Activated T-helper 2 cell treated with anti-CD3 and anti-CD28 coated beads, Interferon-gamma antibody, Interleukin-2, Interleukin-4, amounts not matched to agents 10 μg/mL and 5 μg/mL and 100 μg/mL, durations not matched to agents 14 hours and 24 hours and 36 hours (primary cell): ENCODE measurements at regions of chr13 and their contacts with region 1.

Region 1: DNA sequence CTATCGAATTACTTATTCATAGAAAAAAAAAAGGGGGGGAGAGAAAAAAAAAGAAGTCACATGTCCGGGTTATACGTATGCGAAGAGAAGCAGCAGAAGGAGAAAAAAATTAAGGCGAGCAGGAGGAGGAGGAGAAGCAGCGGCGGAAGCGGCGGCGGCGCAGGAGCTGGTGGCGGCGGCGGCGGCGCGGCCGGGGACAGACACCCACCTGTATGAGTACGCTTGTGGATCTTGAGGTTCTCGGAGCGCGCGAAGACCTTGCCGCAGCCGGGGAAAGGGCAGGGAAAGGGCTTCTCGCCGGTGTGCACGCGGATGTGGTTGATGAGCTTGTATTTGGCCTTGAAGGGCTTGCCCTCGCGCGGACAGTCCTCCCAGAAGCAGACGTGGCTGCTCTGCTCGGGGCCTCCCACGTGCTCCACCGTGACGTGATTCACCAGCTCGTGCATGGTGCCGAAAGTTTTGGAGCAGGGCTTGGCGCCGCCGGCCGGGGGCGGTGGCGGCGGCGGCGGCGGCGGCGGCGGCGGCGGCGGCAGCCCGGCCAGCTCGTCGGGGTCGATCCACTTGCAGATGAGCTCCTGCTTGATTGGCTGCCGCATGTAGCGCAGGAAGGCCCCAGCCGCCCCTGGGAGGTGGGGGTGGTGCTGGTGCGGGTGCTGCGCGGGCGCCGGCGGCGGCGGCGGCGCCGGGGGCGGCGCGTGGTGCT is 1.5 kb downstream of the ZIC5 start:
- DNase-seq: no peak
- H3K4me3 Mint-ChIP-seq: no peak overlapping the region
- H3K27ac Mint-ChIP-seq: peak overlapping the region; percentile 65
- H3K4me1 Mint-ChIP-seq: peaks cover 8% of the 10 kb centered on the region
- H3K27me3 Mint-ChIP-seq: peaks cover 72% of the 10 kb centered on the region

Region 2: GRCh38 chr13:99895223-99895994 is 74.7 kb before region 1 on chr13:
- intact Hi-C with region 1: loop called (anchors 5 kb)
- DNase-seq: no peak
- H3K4me3 Mint-ChIP-seq: peak overlapping the region; percentile 55
- H3K27ac Mint-ChIP-seq: no peak overlapping the region
- H3K4me1 Mint-ChIP-seq: peaks cover 4% of the 10 kb centered on the region
- H3K27me3 Mint-ChIP-seq: peaks cover 65% of the 10 kb centered on the region

Region 3: GRCh38 chr13:99959538-99960230 is 10.4 kb before region 1 on chr13:
- intact Hi-C with region 1: loop called (anchors 2 kb)
- DNase-seq: no peak
- H3K4me3 Mint-ChIP-seq: no peak overlapping the region
- H3K27ac Mint-ChIP-seq: no peak overlapping the region
- H3K4me1 Mint-ChIP-seq: no peaks in the 10 kb centered on the region
- H3K27me3 Mint-ChIP-seq: peaks cover 78% of the 10 kb centered on the region

Region 4: GRCh38 chr13:99995589-99996380 is 25.7 kb after region 1 on chr13:
- intact Hi-C with region 1: loop called (anchors 2 kb)
- DNase-seq: no peak
- H3K4me3 Mint-ChIP-seq: no peak overlapping the region
- H3K27ac Mint-ChIP-seq: peak overlapping the region; percentile 17
- H3K4me1 Mint-ChIP-seq: peaks cover 12% of the 10 kb centered on the region
- H3K27me3 Mint-ChIP-seq: peaks cover 75% of the 10 kb centered on the region

Region 5: GRCh38 chr13:101916108-101916757 is 1946.2 kb after region 1 on chr13:
- intact Hi-C with region 1: loop called (anchors 5 kb)
- DNase-seq: no peak
- H3K4me3 Mint-ChIP-seq: no peak overlapping the region
- H3K27ac Mint-ChIP-seq: no peak overlapping the region
- H3K4me1 Mint-ChIP-seq: no peaks in the 10 kb centered on the region
- H3K27me3 Mint-ChIP-seq: peaks cover 54% of the 10 kb centered on the region